Activated CD4-positive, alpha-beta T cell treated with anti-CD3 and anti-CD28 coated beads for 36 hours (primary cell): ENCODE measurements at regions of chr5 and their contacts with region 1.

Region 1: DNA sequence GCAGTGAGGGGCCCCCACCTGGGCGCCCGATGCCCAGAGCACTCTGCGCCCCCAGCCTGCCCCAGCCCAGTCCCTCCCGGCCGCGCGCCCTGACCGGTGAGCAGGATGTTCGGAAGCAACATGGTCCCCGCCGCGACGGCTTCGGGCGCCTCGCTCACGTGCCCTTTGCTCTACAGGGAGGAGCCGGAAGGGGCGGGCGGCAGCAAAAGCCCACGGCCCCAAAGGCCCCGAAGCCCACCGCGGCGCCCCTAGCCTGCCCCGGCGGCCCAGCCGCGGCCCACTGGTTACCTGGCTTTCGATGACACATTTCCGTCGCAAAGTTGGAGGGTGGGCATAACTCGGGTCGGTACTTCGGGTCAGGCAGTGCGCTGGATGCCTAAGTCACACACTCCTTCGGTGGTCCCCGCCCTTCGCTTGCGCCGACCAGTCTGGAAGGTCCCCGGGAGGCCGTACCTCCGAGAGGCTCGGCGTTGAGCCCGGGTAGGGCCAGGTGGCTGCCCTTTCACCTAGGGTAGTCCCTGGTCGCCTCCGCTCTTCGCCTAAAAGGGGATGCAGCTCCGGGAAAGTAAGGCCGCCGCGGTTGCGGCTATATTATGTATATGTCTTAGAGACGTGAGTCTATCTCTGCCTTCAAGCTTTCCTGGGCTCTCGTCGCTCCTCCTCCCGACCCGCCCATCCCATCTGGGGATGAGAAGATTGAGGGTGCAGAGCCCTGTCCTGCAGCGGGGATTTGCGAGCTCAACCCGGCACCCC is at the starts of genes AK6, RAD17 and TAF9:
- DNase-seq: peak; percentile 95
- ATAC-seq: peak; percentile 94
- H3K4me3 Mint-ChIP-seq: peak within 1 kb of the TSS; percentile 97
- H3K27ac Mint-ChIP-seq: peak within 1 kb of the TSS; percentile 99
- H3K4me1 Mint-ChIP-seq: peaks cover 41% of the 10 kb centered on the region
- H3K27me3 Mint-ChIP-seq: no peaks in the 10 kb centered on the region
- total RNA-seq, gene AK6: 63.2 to 93.8 TPM
- total RNA-seq, gene RAD17: 27.7 to 31.3 TPM
- total RNA-seq, gene TAF9: 67.5 to 73.8 TPM

Region 2: DNA sequence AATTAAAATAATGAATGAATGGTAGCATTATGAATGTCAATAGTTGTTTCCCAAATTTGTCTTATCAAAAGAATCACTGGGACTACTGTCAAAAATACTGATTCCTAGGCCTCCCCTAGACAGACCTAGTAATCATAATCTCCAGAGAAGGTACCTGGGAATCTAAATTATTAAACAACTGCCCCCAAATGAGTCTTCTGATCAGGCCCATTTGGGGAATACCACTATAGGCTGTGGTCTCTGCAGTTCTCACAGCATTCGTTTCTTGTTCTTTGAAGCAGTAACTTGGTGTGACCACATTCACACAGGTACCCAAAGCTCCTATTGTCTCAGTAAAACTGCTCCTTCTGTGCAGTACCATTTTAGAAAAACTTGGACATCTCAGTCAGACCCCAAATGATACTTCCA is 923.1 kb before region 1 on chr5:
- CTCF ChIA-PET with region 1: no interaction called
- POLR2A ChIA-PET with region 1: no interaction called
- intact Hi-C with region 1: no loop called
- DNase-seq: no peak
- ATAC-seq: no peak
- H3K4me3 Mint-ChIP-seq: no peak overlapping the region
- H3K27ac Mint-ChIP-seq: no peak overlapping the region
- H3K4me1 Mint-ChIP-seq: peaks cover 13% of the 10 kb centered on the region
- H3K27me3 Mint-ChIP-seq: no peaks in the 10 kb centered on the region

Region 3: DNA sequence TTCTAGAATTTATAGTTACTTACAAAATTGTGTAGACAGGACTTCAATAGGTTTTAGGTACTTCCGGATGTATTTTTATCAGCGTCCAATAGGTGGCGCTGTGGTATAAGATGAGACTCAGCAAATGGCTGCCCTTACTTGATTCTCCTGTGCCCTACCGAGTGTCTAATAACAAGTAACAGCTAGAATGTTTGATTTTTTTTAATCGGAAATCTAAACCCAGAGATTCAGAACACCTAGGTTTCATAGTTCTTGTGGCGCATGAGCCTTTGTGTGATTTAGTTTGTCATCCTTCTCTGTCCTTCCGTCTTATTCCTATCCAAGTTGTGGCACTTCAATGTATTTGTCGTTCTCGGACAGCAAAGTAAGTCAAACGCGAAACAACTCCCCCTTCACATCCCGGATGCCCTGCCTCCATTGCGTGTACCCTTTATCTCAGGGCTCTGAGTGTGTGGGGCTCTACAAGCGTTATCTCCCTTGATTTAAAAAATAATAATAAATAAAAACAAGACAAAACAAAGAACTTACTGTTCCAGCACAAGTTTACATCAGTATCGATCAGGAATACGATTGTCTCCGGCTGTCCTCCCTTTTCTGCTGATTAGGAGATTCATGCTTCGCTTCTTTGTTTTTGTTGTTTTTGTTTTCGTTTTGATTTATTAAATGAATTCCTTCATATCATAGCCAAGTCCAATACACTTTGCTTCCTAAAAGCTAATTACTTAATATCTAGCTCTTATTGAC is 326.5 kb before region 1 on chr5:
- CTCF ChIA-PET with region 1: no interaction called
- POLR2A ChIA-PET with region 1: no interaction called
- intact Hi-C with region 1: loop called in 1 of 2 experiments (anchors 1 kb)
- DNase-seq: peak; percentile 86
- ATAC-seq: peak; percentile 97
- H3K4me3 Mint-ChIP-seq: peak overlapping the region; percentile 70
- H3K27ac Mint-ChIP-seq: peak overlapping the region; percentile 78
- H3K4me1 Mint-ChIP-seq: peaks cover 15% of the 10 kb centered on the region
- H3K27me3 Mint-ChIP-seq: no peaks in the 10 kb centered on the region

Region 4: GRCh38 chr5:69166686-69167492 is 202.7 kb before region 1 on chr5 and contains the start of gene CCNB1:
- CTCF ChIA-PET with region 1: no interaction called
- POLR2A ChIA-PET with region 1: no interaction called
- intact Hi-C with region 1: loop called (anchors 1 kb)
- DNase-seq: peak; percentile 99
- ATAC-seq: peak; percentile 100
- H3K4me3 Mint-ChIP-seq: peak within 1 kb of the TSS; percentile 94
- H3K27ac Mint-ChIP-seq: peak within 1 kb of the TSS; percentile 81
- H3K4me1 Mint-ChIP-seq: peaks cover 17% of the 10 kb centered on the region
- H3K27me3 Mint-ChIP-seq: no peaks in the 10 kb centered on the region
- total RNA-seq, gene CCNB1: 163 to 205 TPM

Region 5: DNA sequence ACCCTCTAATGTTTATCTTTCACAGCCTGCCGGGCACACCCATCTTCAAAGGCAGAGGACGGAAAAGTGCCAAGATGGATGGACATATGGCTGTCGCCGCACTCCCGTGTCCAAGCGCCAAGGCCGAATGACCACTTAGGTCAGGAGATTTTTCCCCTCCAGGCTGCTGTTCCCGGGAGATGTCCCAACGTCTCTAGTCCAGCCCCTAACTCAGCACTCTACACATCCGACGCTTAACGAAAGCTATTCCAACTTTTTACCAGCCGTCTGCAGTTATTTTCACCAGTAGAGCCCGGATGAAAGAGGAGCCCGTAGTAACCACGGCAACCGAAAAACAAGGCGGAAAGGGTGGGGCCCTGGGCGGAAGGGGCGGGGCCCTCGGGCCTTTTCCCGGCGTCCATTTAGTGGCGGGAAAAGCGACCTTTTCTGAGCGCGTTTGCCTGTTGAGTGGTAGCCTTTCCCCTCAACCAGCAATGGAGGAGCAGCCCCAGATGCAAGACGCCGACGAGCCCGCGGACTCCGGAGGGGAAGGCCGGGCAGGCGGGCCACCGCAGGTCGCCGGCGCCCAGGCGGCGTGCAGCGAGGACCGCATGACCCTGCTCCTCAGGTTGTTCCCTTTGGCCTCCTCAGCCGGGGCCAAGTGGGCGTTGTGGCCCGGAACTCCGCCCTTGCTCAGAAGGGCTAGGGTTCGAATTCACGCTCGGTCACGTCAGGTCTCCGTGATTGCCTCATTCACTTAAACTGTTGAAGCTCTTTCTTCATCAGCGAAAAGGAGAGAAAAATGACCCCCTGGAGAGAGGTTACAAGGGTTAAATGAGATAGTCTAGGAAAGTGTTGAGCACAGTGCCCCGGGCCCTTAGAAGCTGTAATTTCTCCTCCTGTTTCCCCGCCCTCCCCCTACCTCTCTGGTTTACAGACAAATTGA is 180.1 kb before region 1 on chr5 and contains the start of gene CENPH:
- CTCF ChIA-PET with region 1: no interaction called
- POLR2A ChIA-PET with region 1: no interaction called
- intact Hi-C with region 1: loop called (anchors 1 kb)
- DNase-seq: peak; percentile 95
- ATAC-seq: peak; percentile 90
- H3K4me3 Mint-ChIP-seq: peak within 1 kb of the TSS; percentile 96
- H3K27ac Mint-ChIP-seq: peak within 1 kb of the TSS; percentile 99
- H3K4me1 Mint-ChIP-seq: peaks cover 8% of the 10 kb centered on the region
- H3K27me3 Mint-ChIP-seq: no peaks in the 10 kb centered on the region
- total RNA-seq, gene CENPH: 96.0 to 98.3 TPM

Region 6: GRCh38 chr5:69217548-69218526 is 151.7 kb before region 1 on chr5:
- CTCF ChIA-PET with region 1: no interaction called
- POLR2A ChIA-PET with region 1: no interaction called
- intact Hi-C with region 1: loop called in 1 of 2 experiments (anchors 1 kb)
- DNase-seq: peak; percentile 97
- ATAC-seq: peak; percentile 93
- H3K4me3 Mint-ChIP-seq: peak overlapping the region; percentile 91
- H3K27ac Mint-ChIP-seq: peak overlapping the region; percentile 95
- H3K4me1 Mint-ChIP-seq: peaks cover 18% of the 10 kb centered on the region
- H3K27me3 Mint-ChIP-seq: no peaks in the 10 kb centered on the region

Region 7: DNA sequence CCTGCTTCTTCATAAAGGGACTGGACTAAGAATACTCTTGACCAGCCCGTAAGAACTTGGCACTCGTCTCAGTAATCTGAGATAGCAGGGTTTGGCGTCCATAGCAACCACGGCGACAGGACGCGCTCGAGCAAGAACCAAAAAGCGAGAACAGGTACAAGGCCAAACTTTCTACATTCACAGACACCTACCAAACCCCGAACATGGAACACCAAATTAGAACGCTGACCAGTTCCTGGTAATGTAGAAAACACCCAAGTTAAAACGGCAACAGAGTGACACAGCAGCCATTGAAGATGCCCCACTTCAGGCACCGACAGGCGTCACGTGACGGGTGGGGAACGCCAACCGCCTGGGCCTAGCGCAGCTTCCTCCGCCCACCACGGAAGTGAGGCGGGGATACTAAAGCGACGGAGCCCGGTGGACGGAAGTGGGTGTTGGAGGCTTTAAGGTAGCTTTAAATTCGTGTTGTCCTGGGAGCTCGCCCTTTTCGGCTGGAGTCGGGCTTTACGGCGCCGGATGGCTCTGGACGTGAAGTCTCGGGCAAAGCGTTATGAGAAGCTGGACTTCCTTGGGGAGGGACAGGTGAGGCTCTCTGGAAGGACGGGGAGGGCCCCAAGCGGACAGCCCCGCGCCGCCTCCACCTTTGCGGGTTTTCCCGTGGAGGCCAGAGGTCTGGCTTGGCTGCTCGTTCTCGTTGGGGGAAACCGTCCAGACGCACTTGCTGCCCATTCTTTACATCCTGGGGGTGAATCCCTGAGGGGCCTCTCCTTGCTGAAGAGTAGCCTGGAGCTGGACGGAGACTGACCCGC is 134.9 kb before region 1 on chr5 and contains the start of gene CDK7:
- CTCF ChIA-PET with region 1: no interaction called
- POLR2A ChIA-PET with region 1: interaction called, 3 read pairs
- intact Hi-C with region 1: loop called (anchors 1 to 2 kb)
- DNase-seq: peak; percentile 96
- ATAC-seq: peak; percentile 100
- H3K4me3 Mint-ChIP-seq: peak within 1 kb of the TSS; percentile 80
- H3K27ac Mint-ChIP-seq: peak within 1 kb of the TSS; percentile 88
- H3K4me1 Mint-ChIP-seq: peaks cover 35% of the 10 kb centered on the region
- H3K27me3 Mint-ChIP-seq: no peaks in the 10 kb centered on the region
- total RNA-seq, gene CDK7: 47.0 to 47.8 TPM